ENCODE measurements at regions of chr11 and their contacts with region 1.

Region 1: DNA sequence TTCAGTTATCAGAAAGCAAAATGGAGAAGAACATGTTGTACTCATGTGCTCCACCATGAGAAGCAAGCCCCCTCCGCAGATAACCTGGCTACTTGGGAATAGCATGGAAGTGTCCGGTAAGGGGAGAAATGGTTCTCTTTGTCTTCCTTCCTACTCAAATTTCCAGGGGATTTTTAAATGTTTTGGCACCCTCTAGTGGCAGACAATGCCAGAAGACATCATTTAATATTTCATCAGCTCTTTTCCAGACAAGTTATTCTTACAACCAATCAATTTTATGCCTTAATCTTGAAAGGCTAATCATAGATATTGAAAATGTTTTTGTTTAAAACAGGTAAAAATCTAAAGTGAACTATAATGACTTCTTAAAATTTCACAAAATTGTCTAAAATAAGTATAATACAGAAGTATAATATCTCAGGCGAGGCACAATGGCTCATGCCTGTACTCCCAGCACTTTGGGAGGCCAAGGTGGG is 15.7 kb downstream of the CRTAM start:
- DNase-seq: peak; percentile 69 to 83
- H3K4me3 ChIP-seq: no peak overlapping the region
- H3K4me3 Mint-ChIP-seq: no peak overlapping the region
- H3K27ac Mint-ChIP-seq: no peak overlapping the region
- H3K4me1 ChIP-seq: peaks cover 13% of the 10 kb centered on the region
- H3K4me1 Mint-ChIP-seq: peaks cover 13% of the 10 kb centered on the region
- H3K27me3 ChIP-seq: no peaks in the 10 kb centered on the region; the same call in 1 of the 2 replicates
- H3K27me3 Mint-ChIP-seq: peaks cover 3% of the 10 kb centered on the region
- CTCF ChIP-seq: peak; percentile 79 to 80

Region 2: GRCh38 chr11:122559734-122560382 is 294.2 kb before region 1 on chr11:
- CTCF ChIA-PET with region 1: no interaction called
- POLR2A ChIA-PET with region 1: no interaction called
- intact Hi-C with region 1: no loop called
- DNase-seq: peak in 1 of 2 experiments; percentile 25
- H3K4me3 ChIP-seq: no peak overlapping the region
- H3K4me3 Mint-ChIP-seq: peak overlapping the region; percentile 24
- H3K27ac Mint-ChIP-seq: peak overlapping the region; percentile 56
- H3K4me1 ChIP-seq: no peaks in the 10 kb centered on the region
- H3K4me1 Mint-ChIP-seq: no peaks in the 10 kb centered on the region
- H3K27me3 ChIP-seq: no peaks in the 10 kb centered on the region
- H3K27me3 Mint-ChIP-seq: peaks cover 9% of the 10 kb centered on the region
- CTCF ChIP-seq: no peak

Region 3: DNA sequence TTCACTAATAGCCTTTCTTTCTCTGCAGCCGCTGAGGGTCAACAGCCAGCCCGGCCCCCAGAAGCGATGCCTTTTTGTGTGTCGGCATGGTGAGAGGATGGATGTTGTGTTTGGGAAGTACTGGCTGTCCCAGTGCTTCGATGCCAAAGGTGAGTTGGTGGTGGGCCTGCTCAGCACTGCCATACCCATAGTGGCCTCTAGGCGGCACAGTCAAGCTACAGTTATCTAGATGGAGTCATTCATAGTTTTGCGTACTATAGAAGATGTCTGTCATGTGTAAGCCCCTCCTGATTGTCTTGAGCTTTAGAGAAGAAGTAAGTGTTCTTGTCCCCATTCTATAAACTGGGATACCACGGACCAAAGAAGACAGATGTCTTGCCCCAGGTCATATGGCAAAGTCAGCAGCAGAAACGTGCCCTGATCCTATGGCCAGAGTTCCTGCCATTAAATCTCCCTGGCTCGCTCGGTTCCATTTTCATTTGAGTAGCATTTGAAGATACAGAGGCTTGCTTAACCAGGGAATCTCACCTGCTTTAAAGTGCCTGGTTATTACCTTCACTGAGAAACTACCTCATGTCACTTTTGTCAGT is 57.8 kb before region 1 on chr11:
- CTCF ChIA-PET with region 1: interaction called, 15 read pairs
- POLR2A ChIA-PET with region 1: no interaction called
- intact Hi-C with region 1: loop called (anchors 1 kb)
- DNase-seq: peak; percentile 58 to 72
- H3K4me3 ChIP-seq: no peak overlapping the region
- H3K4me3 Mint-ChIP-seq: no peak overlapping the region
- H3K27ac Mint-ChIP-seq: no peak overlapping the region
- H3K4me1 ChIP-seq: no peaks in the 10 kb centered on the region
- H3K4me1 Mint-ChIP-seq: peaks cover 5% of the 10 kb centered on the region
- H3K27me3 ChIP-seq: no peaks in the 10 kb centered on the region
- H3K27me3 Mint-ChIP-seq: no peaks in the 10 kb centered on the region
- CTCF ChIP-seq: peak; percentile 87 to 96

Region 4: GRCh38 chr11:122814401-122814800 is 39.6 kb before region 1 on chr11:
- CTCF ChIA-PET with region 1: interaction called, 13 read pairs
- POLR2A ChIA-PET with region 1: no interaction called
- intact Hi-C with region 1: loop called (anchors 1 kb)
- DNase-seq: peak in 1 of 2 experiments; percentile 24
- H3K4me3 ChIP-seq: no peak overlapping the region
- H3K4me3 Mint-ChIP-seq: no peak overlapping the region
- H3K27ac Mint-ChIP-seq: no peak overlapping the region
- H3K4me1 ChIP-seq: peaks cover 6% of the 10 kb centered on the region
- H3K4me1 Mint-ChIP-seq: peaks cover 7% of the 10 kb centered on the region
- H3K27me3 ChIP-seq: no peaks in the 10 kb centered on the region
- H3K27me3 Mint-ChIP-seq: peaks cover 1% of the 10 kb centered on the region
- CTCF ChIP-seq: peak; percentile 33 to 62

Measured in Caco-2 (cell line).